Heart left ventricle (tissue), 16 donors: ENCODE measurements at regions of chr18 and their contacts with region 1.

Region 1: GRCh38 chr18:48675352-48675761 is 136.5 kb downstream of the CTIF start:
- DNase-seq: peak; percentile 86 to 93 (median 89)
- ATAC-seq: peak; percentile 84 to 92 (median 90)
- H3K4me3 ChIP-seq: no peak overlapping the region
- H3K27ac ChIP-seq: peak overlapping the region in 2 of 12 donors; percentile 13 to 56
- H3K4me1 ChIP-seq: peaks cover 8 to 69% (median 55%) of the 10 kb centered on the region in 12 donors
- H3K27me3 ChIP-seq: no peaks in the 10 kb centered on the region
- CTCF ChIP-seq: peak; percentile 90 to 99 (median 95)
- POLR2A ChIP-seq: no peak

Region 2: DNA sequence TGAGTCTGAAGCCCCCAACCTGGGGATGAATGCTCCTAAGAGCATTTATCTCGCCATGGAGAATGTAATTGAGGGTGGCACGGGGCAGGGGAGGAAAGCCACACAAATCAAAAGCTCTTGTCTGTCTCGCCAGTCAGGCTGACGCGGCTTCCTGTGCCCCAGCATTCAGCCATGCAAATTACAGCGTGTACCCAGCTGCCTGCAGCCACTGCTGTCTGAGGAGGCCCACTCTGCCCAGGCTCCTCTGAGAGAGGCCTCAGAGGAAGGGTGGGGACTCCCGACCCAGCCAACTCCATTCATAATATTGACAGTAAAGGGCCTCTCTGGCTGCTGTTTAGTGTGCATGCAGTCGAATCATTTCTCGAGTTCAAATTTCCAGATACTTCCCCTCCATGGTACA is 253.4 kb after region 1 on chr18:
- intact Hi-C with region 1: loop called in 1 of 10 experiments (anchors 10 kb)
- DNase-seq: peak in 4 of 5 donors; percentile 61 to 85 (median 77)
- ATAC-seq: peak; percentile 67 to 82 (median 71)
- H3K4me3 ChIP-seq: peak overlapping the region in 4 of 12 donors; percentile 8 to 29 (median 10)
- H3K27ac ChIP-seq: peak overlapping the region; percentile 10 to 85 (median 51)
- H3K4me1 ChIP-seq: peaks cover 28 to 99% (median 98%) of the 10 kb centered on the region in 12 donors
- H3K27me3 ChIP-seq: no peaks in the 10 kb centered on the region
- CTCF ChIP-seq: peak in 1 of 12 donors; percentile 8
- POLR2A ChIP-seq: no peak

Region 3: GRCh38 chr18:49178736-49179135 is 503.4 kb after region 1 on chr18:
- intact Hi-C with region 1: loop called (anchors 1 to 10 kb)
- DNase-seq: peak in 1 of 5 donors; percentile 27
- ATAC-seq: no peak
- H3K4me3 ChIP-seq: no peak overlapping the region
- H3K27ac ChIP-seq: no peak overlapping the region
- H3K4me1 ChIP-seq: peaks cover 0 to 27% (median 0%) of the 10 kb centered on the region in 12 donors
- H3K27me3 ChIP-seq: no peaks in the 10 kb centered on the region
- CTCF ChIP-seq: peak; percentile 18 to 65 (median 54)
- POLR2A ChIP-seq: no peak

Region 4: GRCh38 chr18:49250816-49251388 is 575.5 kb after region 1 on chr18:
- intact Hi-C with region 1: loop called in 1 of 10 experiments (anchors 10 kb)
- DNase-seq: no peak
- ATAC-seq: peak in 3 of 4 donors; percentile 38 to 44 (median 42)
- H3K4me3 ChIP-seq: no peak overlapping the region
- H3K27ac ChIP-seq: no peak overlapping the region
- H3K4me1 ChIP-seq: peaks cover 0 to 26% (median 0%) of the 10 kb centered on the region in 12 donors
- H3K27me3 ChIP-seq: no peaks in the 10 kb centered on the region
- CTCF ChIP-seq: peak in 11 of 12 donors; percentile 14 to 58 (median 41)
- POLR2A ChIP-seq: no peak

Region 5: GRCh38 chr18:49459404-49460171 is 784.2 kb after region 1 on chr18:
- intact Hi-C with region 1: loop called in 1 of 10 experiments (anchors 10 kb)
- DNase-seq: no peak
- ATAC-seq: no peak
- H3K4me3 ChIP-seq: peak overlapping the region; percentile 76 to 99 (median 88)
- H3K27ac ChIP-seq: peak overlapping the region in 11 of 12 donors; percentile 73 to 95 (median 88)
- H3K4me1 ChIP-seq: peaks cover 0 to 34% (median 15%) of the 10 kb centered on the region in 12 donors
- H3K27me3 ChIP-seq: no peaks in the 10 kb centered on the region
- CTCF ChIP-seq: no peak
- POLR2A ChIP-seq: no peak